ENCODE measurements at regions of chr18 and their contacts with region 1.

Region 1: GRCh38 chr18:42053188-42053781 is 98.3 kb downstream of the PIK3C3 start:
- DNase-seq: peak; percentile 58
- ATAC-seq: peak; percentile 84
- H3K4me3 Mint-ChIP-seq: no peak overlapping the region
- H3K27ac Mint-ChIP-seq: no peak overlapping the region
- H3K4me1 Mint-ChIP-seq: peaks cover 8% of the 10 kb centered on the region
- H3K27me3 Mint-ChIP-seq: no peaks in the 10 kb centered on the region
- CTCF ChIP-seq: peak; percentile 96

Region 2: DNA sequence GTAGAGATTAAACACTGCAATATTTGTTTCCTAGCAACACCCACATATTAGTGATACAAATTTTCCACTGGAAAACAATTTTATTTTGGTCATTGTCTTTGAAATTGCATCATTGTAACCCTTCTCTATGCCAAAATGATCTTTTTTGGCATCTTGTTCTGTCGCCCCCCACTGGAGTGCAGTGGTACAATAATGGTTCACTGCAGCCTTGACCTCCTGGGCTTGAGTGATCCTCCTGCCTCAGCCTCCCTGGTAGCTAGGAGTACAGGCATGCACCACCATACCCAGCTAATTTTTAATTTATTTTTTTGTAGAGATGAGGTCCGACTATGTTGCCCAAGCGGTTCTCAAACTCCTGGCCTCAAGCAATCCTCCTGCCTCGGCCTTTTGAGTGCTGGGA is 19.1 kb after region 1 on chr18:
- CTCF ChIA-PET with region 1: interaction called, 69 read pairs
- POLR2A ChIA-PET with region 1: no interaction called
- intact Hi-C with region 1: no loop called
- DNase-seq: peak; percentile 7
- ATAC-seq: no peak
- H3K4me3 Mint-ChIP-seq: no peak overlapping the region
- H3K27ac Mint-ChIP-seq: no peak overlapping the region
- H3K4me1 Mint-ChIP-seq: peaks cover 2% of the 10 kb centered on the region
- H3K27me3 Mint-ChIP-seq: no peaks in the 10 kb centered on the region
- CTCF ChIP-seq: peak; percentile 14

Region 3: GRCh38 chr18:42082415-42083234 is 29.3 kb after region 1 on chr18:
- CTCF ChIA-PET with region 1: interaction called, 10 read pairs
- POLR2A ChIA-PET with region 1: interaction called, 4 read pairs
- intact Hi-C with region 1: no loop called
- DNase-seq: no peak
- ATAC-seq: peak; percentile 51
- H3K4me3 Mint-ChIP-seq: no peak overlapping the region
- H3K27ac Mint-ChIP-seq: peak overlapping the region; percentile 76
- H3K4me1 Mint-ChIP-seq: peaks cover 14% of the 10 kb centered on the region
- H3K27me3 Mint-ChIP-seq: no peaks in the 10 kb centered on the region
- CTCF ChIP-seq: no peak

Region 4: GRCh38 chr18:42426496-42427015 is 373.3 kb after region 1 on chr18:
- CTCF ChIA-PET with region 1: no interaction called
- POLR2A ChIA-PET with region 1: no interaction called
- intact Hi-C with region 1: no loop called
- DNase-seq: no peak
- ATAC-seq: no peak
- H3K4me3 Mint-ChIP-seq: no peak overlapping the region
- H3K27ac Mint-ChIP-seq: no peak overlapping the region
- H3K4me1 Mint-ChIP-seq: no peaks in the 10 kb centered on the region
- H3K27me3 Mint-ChIP-seq: no peaks in the 10 kb centered on the region
- CTCF ChIP-seq: no peak

Measured in activated CD8-positive, alpha-beta T cell treated with anti-CD3 and anti-CD28 coated beads for 36 hours (primary cell).